Activated T-helper 2 cell treated with anti-CD3 and anti-CD28 coated beads, Interferon-gamma antibody, Interleukin-2, Interleukin-4, amounts not matched to agents 10 μg/mL and 5 μg/mL and 100 μg/mL, durations not matched to agents 14 hours and 24 hours and 36 hours (primary cell): ENCODE measurements at regions of chr2 and their contacts with region 1.

Region 1: DNA sequence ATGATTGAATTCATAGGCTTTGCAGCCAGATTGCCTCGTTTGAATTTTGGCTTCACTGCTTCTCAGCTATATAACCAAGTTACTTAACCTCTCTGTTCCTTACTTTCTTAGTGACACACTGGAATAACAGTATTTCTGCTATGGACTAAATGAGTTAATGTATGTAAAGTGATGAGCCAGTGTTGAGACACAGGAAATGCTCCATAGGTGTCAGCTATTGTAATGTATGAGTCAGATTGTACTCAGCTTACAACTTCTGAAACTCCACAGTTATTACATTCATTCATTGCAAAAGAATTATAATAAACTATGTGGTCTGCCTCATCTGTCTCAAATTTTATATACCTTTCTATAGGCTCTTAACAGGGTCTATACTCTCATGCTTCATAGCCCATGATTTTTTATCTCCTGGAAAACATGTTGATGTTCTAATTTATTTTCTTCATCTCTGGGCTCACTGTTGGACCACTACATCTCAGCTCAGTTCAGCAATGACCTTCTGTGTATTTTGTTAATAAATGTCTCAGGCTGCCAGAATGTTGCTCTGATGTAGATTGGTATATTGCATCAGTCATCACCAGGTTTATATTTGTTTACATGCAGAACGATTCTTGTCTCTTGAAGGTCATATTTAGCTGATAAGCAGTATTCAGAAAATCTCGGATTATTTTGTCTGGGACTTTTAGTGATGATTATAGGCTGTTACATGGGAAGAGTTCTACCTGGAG is 76.2 kb downstream of the MAP3K20 start:
- DNase-seq: no peak
- H3K4me3 Mint-ChIP-seq: no peak overlapping the region
- H3K27ac Mint-ChIP-seq: peak overlapping the region; percentile 41
- H3K4me1 Mint-ChIP-seq: peaks cover 54% of the 10 kb centered on the region
- H3K27me3 Mint-ChIP-seq: no peaks in the 10 kb centered on the region

Region 2: GRCh38 chr2:173008786-173009185 is 143.0 kb before region 1 on chr2:
- intact Hi-C with region 1: no loop called
- DNase-seq: no peak
- H3K4me3 Mint-ChIP-seq: no peak overlapping the region
- H3K27ac Mint-ChIP-seq: no peak overlapping the region
- H3K4me1 Mint-ChIP-seq: peaks cover 7% of the 10 kb centered on the region
- H3K27me3 Mint-ChIP-seq: peaks cover 13% of the 10 kb centered on the region

Region 3: GRCh38 chr2:173048897-173049661 is 102.8 kb before region 1 on chr2:
- intact Hi-C with region 1: loop called (anchors 1 kb)
- DNase-seq: no peak
- H3K4me3 Mint-ChIP-seq: no peak overlapping the region
- H3K27ac Mint-ChIP-seq: no peak overlapping the region
- H3K4me1 Mint-ChIP-seq: peaks cover 14% of the 10 kb centered on the region
- H3K27me3 Mint-ChIP-seq: peaks cover 31% of the 10 kb centered on the region

Region 4: GRCh38 chr2:173075781-173076580 is 75.9 kb before region 1 on chr2 and contains the start of gene MAP3K20:
- intact Hi-C with region 1: loop called (anchors 5 kb)
- DNase-seq: peak; percentile 44
- H3K4me3 Mint-ChIP-seq: peak within 1 kb of the TSS; percentile 82
- H3K27ac Mint-ChIP-seq: peak within 1 kb of the TSS; percentile 75
- H3K4me1 Mint-ChIP-seq: peaks cover 29% of the 10 kb centered on the region
- H3K27me3 Mint-ChIP-seq: peaks cover 30% of the 10 kb centered on the region
- total RNA-seq, gene MAP3K20: 26.5 and 26.8 TPM in 2 replicates

Region 5: GRCh38 chr2:173101687-173102086 is 50.1 kb before region 1 on chr2:
- intact Hi-C with region 1: loop called (anchors 1 kb)
- DNase-seq: no peak
- H3K4me3 Mint-ChIP-seq: no peak overlapping the region
- H3K27ac Mint-ChIP-seq: peak overlapping the region; percentile 38
- H3K4me1 Mint-ChIP-seq: peaks cover 51% of the 10 kb centered on the region
- H3K27me3 Mint-ChIP-seq: no peaks in the 10 kb centered on the region

Region 6: GRCh38 chr2:173171924-173172643 is 20.2 kb after region 1 on chr2:
- intact Hi-C with region 1: no loop called
- DNase-seq: no peak
- H3K4me3 Mint-ChIP-seq: no peak overlapping the region
- H3K27ac Mint-ChIP-seq: no peak overlapping the region
- H3K4me1 Mint-ChIP-seq: no peaks in the 10 kb centered on the region
- H3K27me3 Mint-ChIP-seq: peaks cover 10% of the 10 kb centered on the region

Region 7: DNA sequence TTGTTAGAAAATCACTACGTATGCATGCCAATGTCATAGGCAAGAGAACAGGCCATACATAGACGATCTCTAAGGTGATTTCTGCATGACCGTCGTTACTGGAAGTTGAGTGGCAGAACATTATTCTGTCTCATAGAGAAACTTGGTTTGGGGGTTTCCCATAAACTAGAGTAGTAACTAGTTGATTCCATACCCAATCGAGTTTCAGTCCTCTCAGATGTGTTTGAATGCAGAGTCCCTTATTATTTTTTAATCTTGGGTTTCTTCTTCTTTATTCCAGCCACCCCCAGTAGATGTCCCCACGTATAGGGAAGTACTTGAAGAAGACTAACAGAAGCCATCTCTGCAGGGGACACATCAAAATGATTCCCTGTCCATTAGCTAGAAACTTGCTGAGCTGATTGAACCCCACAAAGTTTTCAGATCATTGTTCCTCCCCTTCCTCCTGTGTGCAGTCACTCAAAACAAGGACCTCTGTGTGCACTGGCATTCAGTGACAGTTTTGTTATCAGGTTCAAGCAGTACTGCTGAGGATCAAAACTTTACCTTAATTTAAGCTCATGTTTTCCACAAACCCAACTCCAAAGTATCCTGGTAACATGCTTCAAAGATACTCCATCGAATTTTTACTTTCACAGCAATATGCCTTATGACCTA is 134.4 kb after region 1 on chr2:
- intact Hi-C with region 1: loop called (anchors 1 kb)
- DNase-seq: no peak
- H3K4me3 Mint-ChIP-seq: no peak overlapping the region
- H3K27ac Mint-ChIP-seq: peak overlapping the region; percentile 35
- H3K4me1 Mint-ChIP-seq: peaks cover 19% of the 10 kb centered on the region
- H3K27me3 Mint-ChIP-seq: peaks cover 2% of the 10 kb centered on the region